GM12878 (cell line): ENCODE measurements at regions of chr9 and their contacts with region 1.

Region 1: DNA sequence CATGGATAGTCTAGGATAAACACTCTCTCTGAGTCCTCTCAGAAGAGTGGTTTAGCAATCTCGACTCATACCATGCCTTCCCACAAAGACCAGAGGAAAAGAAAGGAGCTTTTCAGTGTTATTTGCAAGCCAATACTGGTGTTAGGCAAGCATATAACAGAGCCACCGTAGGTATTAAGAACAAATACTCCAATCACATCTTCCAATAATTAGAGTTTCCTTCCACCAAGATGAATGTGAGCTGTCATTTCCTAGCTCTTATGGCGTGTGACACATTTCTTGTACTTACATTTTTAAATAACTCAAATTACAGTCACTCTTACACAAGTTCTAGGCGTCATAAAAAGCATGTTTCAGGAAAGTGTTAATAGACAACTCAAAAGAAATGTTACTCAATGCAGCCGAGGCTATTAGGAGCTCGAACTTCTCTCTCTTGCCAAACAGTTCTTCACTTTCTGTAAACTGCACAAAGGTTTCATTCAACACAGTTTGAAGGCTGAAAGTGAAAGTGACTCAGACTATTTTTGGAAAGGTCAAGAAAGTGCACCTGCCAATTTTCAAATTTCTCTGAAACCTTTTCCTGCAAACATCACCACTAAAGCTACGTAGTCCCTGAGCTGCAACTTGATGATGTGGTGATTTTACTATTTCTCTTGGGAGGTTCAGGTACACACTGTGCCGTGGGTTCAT is 153.8 kb downstream of the AUH start:
- DNase-seq: peak; percentile 87
- ATAC-seq: peak; percentile 93
- H3K4me3 ChIP-seq: peak overlapping the region; percentile 29; the same call in 1 of the 2 replicates
- H3K27ac ChIP-seq: peak overlapping the region; percentile 82
- H3K4me1 ChIP-seq: peaks cover 24% of the 10 kb centered on the region
- H3K27me3 ChIP-seq: no peaks in the 10 kb centered on the region
- CTCF ChIP-seq: no peak
- EP300 ChIP-seq: peak; percentile 91 to 92
- POLR2A ChIP-seq: no peak
- RAD21 ChIP-seq: no peak; the same call in 1 of the 2 replicates

Region 2: GRCh38 chr9:91150998-91151717 is 56.7 kb before region 1 on chr9:
- CTCF ChIA-PET with region 1: interaction called, 4 read pairs
- POLR2A ChIA-PET with region 1: interaction called, 5 read pairs
- RAD21 ChIA-PET with region 1: interaction called, 11 read pairs
- SMC1A ChIA-PET with region 1: interaction called, 9 read pairs
- in situ Hi-C with region 1: no loop called
- intact Hi-C with region 1: loop called (anchors 1 kb)
- DNase-seq: peak; percentile 72
- ATAC-seq: peak; percentile 75
- H3K4me3 ChIP-seq: 0 out of 2 replicates have a peak overlapping the region, but pooled peaks have one; percentile 3
- H3K27ac ChIP-seq: peak overlapping the region; percentile 35; the same call in 1 of the 2 replicates
- H3K4me1 ChIP-seq: peaks cover 37% of the 10 kb centered on the region
- H3K27me3 ChIP-seq: peaks cover 0 to 7% of the 10 kb centered on the region in 2 experiments; a peak in 1 of 4 replicates
- CTCF ChIP-seq: no peak
- EP300 ChIP-seq: peak; percentile 94 to 95; a peak in 2 of 4 replicates
- POLR2A ChIP-seq: no peak
- RAD21 ChIP-seq: no peak

Region 3: DNA sequence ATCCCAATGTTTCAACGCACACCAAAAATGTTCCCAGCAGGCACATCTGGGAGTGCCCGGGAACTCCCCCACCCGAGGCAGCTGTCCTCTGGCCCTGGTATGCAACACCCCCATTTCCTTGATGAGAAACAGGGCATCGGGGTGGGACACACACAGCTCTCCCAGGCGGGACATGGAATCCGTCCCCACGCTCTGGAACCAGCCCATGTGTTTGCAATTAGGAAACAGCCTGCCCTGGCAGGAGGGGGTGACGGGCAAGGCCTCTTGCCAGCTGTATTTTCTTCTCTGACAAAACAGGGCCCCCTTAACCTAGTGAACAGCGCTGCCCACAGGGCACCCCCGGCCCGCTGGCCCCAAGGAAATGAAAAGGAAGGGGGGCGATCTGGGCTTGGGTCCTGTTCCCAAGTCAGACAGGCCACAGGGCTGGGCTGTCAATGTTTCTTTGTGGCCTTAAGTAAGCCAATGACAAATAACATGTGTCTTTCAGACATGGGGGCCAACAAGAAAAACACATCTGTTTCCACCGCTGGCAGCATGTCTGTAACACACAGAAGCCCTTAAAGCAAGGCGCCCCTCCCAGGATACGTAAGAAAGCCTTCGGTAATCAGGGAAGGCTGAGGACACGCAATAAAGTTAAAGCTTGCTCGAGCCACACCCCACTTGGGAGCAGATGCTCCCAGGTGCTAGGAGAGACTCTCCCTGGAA is 616.9 kb after region 1 on chr9:
- CTCF ChIA-PET with region 1: no interaction called
- POLR2A ChIA-PET with region 1: no interaction called
- RAD21 ChIA-PET with region 1: no interaction called
- SMC1A ChIA-PET with region 1: no interaction called
- in situ Hi-C with region 1: no loop called
- intact Hi-C with region 1: no loop called
- DNase-seq: no peak
- ATAC-seq: no peak
- H3K4me3 ChIP-seq: no peak overlapping the region
- H3K27ac ChIP-seq: no peak overlapping the region
- H3K4me1 ChIP-seq: no peaks in the 10 kb centered on the region
- H3K27me3 ChIP-seq: peaks cover 0 to 5% of the 10 kb centered on the region in 2 experiments; a peak in 2 of 4 replicates
- CTCF ChIP-seq: no peak
- EP300 ChIP-seq: no peak
- POLR2A ChIP-seq: no peak
- RAD21 ChIP-seq: no peak